Right ventricle myocardium inferior (tissue), 1 donor: ENCODE measurements at regions of chr16 and their contacts with region 1.

Region 1: GRCh38 chr16:81873843-81874752 is 95.0 kb downstream of the PLCG2 start:
- DNase-seq: no peak
- ATAC-seq: no peak

Region 2: DNA sequence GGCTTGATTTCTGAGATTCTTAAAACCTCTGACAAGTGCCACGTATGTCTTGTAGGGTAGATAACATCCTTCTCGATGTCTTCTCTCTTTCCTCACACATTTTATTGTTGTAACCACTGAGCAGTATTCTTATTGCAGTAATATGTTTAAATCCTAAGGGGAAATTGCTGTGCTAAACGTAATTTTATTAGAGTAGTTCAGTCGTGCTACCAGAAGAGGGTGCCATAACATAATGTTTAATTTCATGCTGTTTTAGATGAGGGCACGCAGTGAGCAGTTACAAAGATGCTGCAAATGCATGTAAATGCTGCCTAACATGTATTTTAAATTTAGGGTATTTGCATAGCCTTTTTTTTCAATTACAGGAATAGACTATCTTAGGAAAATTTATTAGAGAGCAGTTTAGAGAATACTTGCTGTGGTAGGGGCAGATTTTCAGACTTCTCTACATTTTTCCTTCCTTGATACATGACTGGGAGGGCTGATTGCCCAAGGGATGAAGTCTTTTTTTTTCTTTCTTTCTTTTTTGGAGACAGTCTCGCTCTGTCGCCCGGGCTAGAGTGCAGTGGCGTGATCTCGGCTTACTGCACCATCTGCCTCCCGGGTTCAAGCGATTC is 507.7 kb before region 1 on chr16:
- intact Hi-C with region 1: loop called (anchors 10 kb)
- DNase-seq: no peak
- ATAC-seq: no peak

Region 3: DNA sequence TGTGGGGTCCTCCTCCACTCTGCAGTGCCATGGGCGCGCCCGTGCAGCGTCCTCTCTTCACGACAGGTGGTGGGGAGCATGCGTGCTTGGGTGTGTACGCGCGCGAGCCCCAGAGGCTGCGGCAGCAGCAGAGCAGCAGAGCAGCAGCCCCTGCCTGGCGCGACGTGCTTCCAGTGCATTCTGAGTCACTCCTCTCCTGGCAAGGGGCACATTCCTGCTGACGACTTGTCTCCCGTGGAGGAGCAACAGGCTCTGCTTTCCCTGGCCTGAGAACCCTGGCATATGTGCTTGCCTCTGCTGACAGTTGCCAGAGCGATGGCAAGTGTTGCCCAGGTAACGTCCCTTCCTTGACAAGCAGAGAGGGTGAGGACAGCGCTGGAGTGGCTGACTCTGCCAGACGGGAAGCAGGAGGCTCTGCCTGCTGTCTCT is 228.8 kb before region 1 on chr16:
- intact Hi-C with region 1: no loop called
- DNase-seq: no peak
- ATAC-seq: peak; percentile 90